Posterior cingulate gyrus (tissue), 11 donors: ENCODE measurements at regions of chr16 and their contacts with region 1.

Region 1: DNA sequence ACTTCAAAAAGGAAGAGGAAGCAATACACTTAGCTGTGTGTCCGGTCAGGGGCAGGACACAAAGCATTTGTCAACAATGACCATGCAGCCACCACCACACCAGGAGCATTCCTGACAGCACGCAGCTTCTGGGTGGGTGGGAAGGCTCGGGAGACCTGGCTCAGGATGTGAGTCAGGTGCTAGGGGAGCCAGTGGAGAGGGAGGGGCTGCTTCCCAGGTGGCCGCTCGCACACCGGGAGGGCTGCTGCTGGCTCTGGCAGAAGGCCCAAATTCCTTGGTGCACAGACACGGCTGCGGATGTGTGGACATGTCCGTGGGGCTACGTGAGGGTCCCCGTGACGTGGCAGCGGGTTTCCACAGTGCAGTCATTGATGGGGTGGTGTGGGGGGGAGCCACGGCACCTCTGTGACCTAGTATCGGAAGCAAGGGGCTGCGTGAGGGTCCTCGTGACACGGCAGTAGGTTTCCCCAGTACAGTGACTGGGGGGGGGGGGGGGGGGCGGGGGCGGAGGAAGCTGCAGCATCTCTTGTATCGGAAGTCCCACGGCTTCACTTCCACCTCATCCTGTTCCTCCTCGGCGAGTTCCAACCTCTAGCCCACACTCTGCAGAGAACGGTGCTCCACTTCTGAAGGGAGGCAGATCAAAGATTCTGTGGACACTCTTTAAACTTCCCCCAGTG is 112.8 kb downstream of the ZNF778 start:
- DNase-seq: peak in 3 of 10 donors; percentile 54 to 79 (median 72)

Region 2: GRCh38 chr16:89279666-89280481 is 50.4 kb before region 1 on chr16:
- intact Hi-C with region 1: no loop called
- DNase-seq: no peak

Region 3: GRCh38 chr16:89374393-89374960 is 44.2 kb after region 1 on chr16:
- intact Hi-C with region 1: loop called (anchors 5 kb)
- DNase-seq: peak in 8 of 10 donors; percentile 50 to 93 (median 57)